Gastrocnemius medialis (tissue), 4 donors: ENCODE measurements at regions of chr11 and their contacts with region 1.

Region 1: GRCh38 chr11:47152953-47153950 is 23.4 kb downstream of the ARFGAP2 start:
- DNase-seq: peak; percentile 64 to 87
- ATAC-seq: peak; percentile 81
- H3K4me3 ChIP-seq: no peak overlapping the region
- H3K27ac ChIP-seq: peak overlapping the region in 3 of 4 donors; percentile 1 to 41 (median 39)
- H3K4me1 ChIP-seq: peaks cover 21 to 23% of the 10 kb centered on the region in 2 donors
- H3K27me3 ChIP-seq: no peaks in the 10 kb centered on the region
- CTCF ChIP-seq: peak; percentile 92 to 98 (median 94)
- POLR2A ChIP-seq: no peak

Region 2: GRCh38 chr11:46977940-46978595 is 175.2 kb before region 1 on chr11:
- in situ Hi-C with region 1: no loop called
- intact Hi-C with region 1: no loop called
- DNase-seq: no peak
- ATAC-seq: no peak
- H3K4me3 ChIP-seq: no peak overlapping the region
- H3K27ac ChIP-seq: no peak overlapping the region
- H3K4me1 ChIP-seq: no peaks in the 10 kb centered on the region
- H3K27me3 ChIP-seq: no peaks in the 10 kb centered on the region
- CTCF ChIP-seq: no peak
- POLR2A ChIP-seq: no peak

Region 3: DNA sequence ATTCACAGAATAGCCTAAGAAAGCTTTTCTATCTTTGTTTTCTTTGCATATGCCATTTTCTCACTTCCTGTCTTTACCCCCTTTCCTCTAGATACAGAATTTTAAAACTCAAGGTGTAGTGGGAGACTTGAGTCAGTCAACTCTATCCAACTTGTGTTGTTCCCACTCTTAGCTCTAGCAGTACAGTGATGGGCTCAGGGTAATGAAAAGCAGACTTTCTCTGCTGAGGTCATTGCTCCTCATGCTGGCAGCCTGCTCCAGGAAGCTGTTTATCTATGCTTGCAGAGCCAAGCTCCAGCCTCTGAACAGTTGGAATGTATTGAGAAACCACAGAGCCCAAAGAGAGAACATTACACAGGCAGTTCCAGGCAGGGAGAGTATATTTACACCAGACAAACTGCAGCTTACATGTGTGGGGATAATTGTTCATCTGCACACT is 148.6 kb before region 1 on chr11:
- in situ Hi-C with region 1: no loop called
- intact Hi-C with region 1: loop called (anchors 5 kb)
- DNase-seq: peak; percentile 68 to 78
- ATAC-seq: peak; percentile 100
- H3K4me3 ChIP-seq: no peak overlapping the region
- H3K27ac ChIP-seq: peak overlapping the region; percentile 23 to 46 (median 39)
- H3K4me1 ChIP-seq: peaks cover 16 to 37% of the 10 kb centered on the region in 2 donors
- H3K27me3 ChIP-seq: no peaks in the 10 kb centered on the region
- CTCF ChIP-seq: no peak
- POLR2A ChIP-seq: no peak